Mammary epithelial cell (primary cell): ENCODE measurements at regions of chr2 and their contacts with region 1.

Region 1: GRCh38 chr2:75640621-75641121 is 5.9 kb upstream of the MRPL19 start:
- DNase-seq: peak; percentile 53
- H3K4me3 ChIP-seq: no peak overlapping the region
- H3K27ac ChIP-seq: no peak overlapping the region
- H3K4me1 ChIP-seq: peaks cover 4% of the 10 kb centered on the region
- H3K27me3 ChIP-seq: peaks cover 3% of the 10 kb centered on the region
- CTCF ChIP-seq: peak; percentile 100

Region 2: GRCh38 chr2:75560768-75561565 is 79.7 kb before region 1 on chr2 and contains the start of gene EVA1A:
- CTCF ChIA-PET with region 1: no interaction called
- dilution Hi-C with region 1: no loop called
- in situ Hi-C with region 1: no loop called
- intact Hi-C with region 1: no loop called
- DNase-seq: peak; percentile 70
- H3K4me3 ChIP-seq: peak within 1 kb of the TSS; percentile 72 to 77 (median 75)
- H3K27ac ChIP-seq: peak within 1 kb of the TSS; percentile 61
- H3K4me1 ChIP-seq: peaks cover 30% of the 10 kb centered on the region
- H3K27me3 ChIP-seq: no peaks in the 10 kb centered on the region
- CTCF ChIP-seq: no peak
- total RNA-seq, gene EVA1A: 19.2 to 28.7 TPM

Region 3: DNA sequence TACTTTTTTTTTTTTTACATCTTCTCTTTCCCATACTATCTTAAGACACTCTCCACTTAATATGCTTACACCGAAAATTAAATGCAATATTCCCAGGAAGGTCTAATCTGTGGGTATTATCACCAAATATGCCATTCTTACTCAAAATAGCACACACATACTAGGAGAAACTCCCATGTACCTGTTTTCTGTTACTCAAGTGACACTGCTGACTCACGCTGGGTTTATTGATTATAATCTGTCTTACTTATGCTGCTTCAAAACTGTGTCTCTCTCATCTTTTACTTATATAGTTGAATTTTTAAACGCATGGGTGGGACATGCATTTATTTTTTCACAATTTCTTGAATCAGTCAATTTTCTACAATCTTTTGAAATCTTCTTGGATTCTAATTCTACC is 35.8 kb after region 1 on chr2:
- CTCF ChIA-PET with region 1: interaction called, 3 read pairs
- dilution Hi-C with region 1: no loop called
- in situ Hi-C with region 1: no loop called
- intact Hi-C with region 1: loop called (anchors 1 kb)
- DNase-seq: no peak
- H3K4me3 ChIP-seq: no peak overlapping the region
- H3K27ac ChIP-seq: no peak overlapping the region
- H3K4me1 ChIP-seq: no peaks in the 10 kb centered on the region
- H3K27me3 ChIP-seq: no peaks in the 10 kb centered on the region
- CTCF ChIP-seq: no peak

Region 4: DNA sequence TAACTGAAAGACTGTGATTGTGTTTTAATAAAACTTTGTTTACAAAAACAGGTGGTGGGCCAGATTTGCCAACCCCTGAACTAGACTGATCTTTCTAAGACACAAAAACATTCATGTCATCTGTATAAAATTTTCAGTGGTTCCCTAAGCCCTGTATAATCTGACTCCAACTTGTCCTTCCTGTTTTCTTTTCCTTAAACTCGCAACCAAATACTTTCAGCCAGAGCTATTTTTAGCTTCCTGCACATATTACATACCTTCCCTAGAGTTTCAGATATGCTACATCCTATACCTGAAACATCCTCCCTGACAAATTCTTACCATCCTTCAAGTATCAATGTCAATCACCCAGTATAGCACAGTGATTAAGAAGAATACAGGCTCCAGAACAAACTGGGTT is 65.2 kb after region 1 on chr2:
- CTCF ChIA-PET with region 1: no interaction called
- dilution Hi-C with region 1: no loop called
- in situ Hi-C with region 1: no loop called
- intact Hi-C with region 1: no loop called
- DNase-seq: no peak
- H3K4me3 ChIP-seq: no peak overlapping the region
- H3K27ac ChIP-seq: no peak overlapping the region
- H3K4me1 ChIP-seq: peaks cover 5% of the 10 kb centered on the region
- H3K27me3 ChIP-seq: no peaks in the 10 kb centered on the region
- CTCF ChIP-seq: no peak

Region 5: DNA sequence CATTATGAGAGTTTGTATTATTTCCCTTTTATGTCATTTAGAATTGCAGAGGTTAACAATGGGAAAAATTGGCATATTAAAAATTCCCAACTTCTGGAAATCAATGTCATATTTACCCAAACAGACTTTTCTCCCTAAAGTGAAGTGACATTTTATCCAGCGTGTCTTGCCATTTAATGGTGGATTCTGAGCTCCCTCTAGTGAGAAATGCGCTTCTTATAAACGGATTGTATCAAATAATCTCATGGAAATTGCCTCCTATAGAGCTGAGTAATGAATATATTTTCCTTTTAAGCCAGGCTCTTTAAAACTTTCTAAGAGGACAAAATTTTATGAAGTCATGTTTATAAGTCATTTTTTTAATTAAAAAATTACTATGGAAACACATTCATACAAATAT is 75.7 kb after region 1 on chr2:
- CTCF ChIA-PET with region 1: no interaction called
- dilution Hi-C with region 1: no loop called
- in situ Hi-C with region 1: no loop called
- intact Hi-C with region 1: loop called (anchors 2 kb)
- DNase-seq: no peak
- H3K4me3 ChIP-seq: no peak overlapping the region
- H3K27ac ChIP-seq: no peak overlapping the region
- H3K4me1 ChIP-seq: no peaks in the 10 kb centered on the region
- H3K27me3 ChIP-seq: no peaks in the 10 kb centered on the region
- CTCF ChIP-seq: no peak